ENCODE measurements at regions of chr6 and their contacts with region 1.

Region 1: DNA sequence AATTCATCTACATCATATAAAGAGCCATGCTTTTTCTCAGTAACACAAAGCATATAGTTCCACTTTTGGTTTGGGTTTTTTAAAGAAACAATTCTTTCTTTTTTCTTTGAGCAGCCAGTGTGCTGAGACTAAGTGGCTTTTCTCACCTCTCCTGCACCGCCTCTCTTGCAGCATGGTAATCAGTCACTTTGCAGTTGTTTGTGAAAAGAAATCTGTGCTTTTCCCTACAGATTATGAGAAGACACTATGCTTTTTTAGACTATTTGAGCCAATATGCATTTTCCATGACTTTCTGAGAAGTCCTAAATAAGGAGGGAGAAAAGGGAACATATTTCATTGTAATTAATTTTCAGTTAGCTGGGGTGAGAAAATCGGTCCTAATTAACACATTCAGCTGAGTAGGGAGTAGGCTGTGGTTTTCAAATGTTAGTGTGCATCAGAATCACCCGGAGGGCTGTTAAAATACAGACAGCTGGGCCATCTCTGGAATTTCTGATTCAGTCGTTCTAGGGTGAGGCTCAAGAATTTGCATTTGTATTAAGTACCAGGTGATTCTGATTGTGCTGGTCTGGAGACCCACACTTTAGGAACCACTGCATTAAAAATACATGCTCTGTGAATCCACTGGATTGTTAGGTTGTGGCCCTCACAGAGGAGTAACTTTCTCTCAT is 155.2 kb downstream of the TINAG start:
- DNase-seq: no peak
- H3K4me3 ChIP-seq: no peak overlapping the region
- H3K27ac ChIP-seq: peak overlapping the region; percentile 58
- H3K4me1 ChIP-seq: peaks cover 31% of the 10 kb centered on the region
- H3K27me3 ChIP-seq: no peaks in the 10 kb centered on the region
- CTCF ChIP-seq: no peak

Region 2: DNA sequence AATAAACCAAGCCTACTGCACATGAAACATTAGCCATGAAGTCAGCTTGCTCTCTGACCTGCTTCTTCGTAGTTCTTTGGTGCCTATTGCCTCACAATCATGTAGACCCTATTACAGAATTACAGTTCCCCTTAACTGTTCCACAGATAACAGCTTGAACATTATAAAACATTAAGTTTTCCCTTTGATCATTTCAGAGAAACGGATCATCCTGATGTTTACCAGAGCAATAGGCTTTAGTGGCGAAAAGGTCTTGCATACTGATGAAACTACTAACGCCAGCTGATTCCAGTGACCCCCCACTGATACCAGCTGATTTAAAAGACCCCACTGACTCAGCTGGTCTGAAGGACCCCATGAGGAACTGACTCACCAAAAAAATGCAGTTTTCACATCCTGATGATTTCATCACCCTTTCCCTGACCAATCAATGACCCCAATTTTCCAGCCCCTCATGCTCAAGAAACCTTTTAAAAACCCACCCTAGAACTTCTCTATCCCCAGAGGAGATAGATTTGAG is 391.6 kb before region 1 on chr6:
- CTCF ChIA-PET with region 1: no interaction called
- POLR2A ChIA-PET with region 1: no interaction called
- intact Hi-C with region 1: loop called (anchors 2 kb)
- DNase-seq: peak; percentile 33
- H3K4me3 ChIP-seq: no peak overlapping the region
- H3K27ac ChIP-seq: peak overlapping the region; percentile 21
- H3K4me1 ChIP-seq: peaks cover 54% of the 10 kb centered on the region
- H3K27me3 ChIP-seq: no peaks in the 10 kb centered on the region
- CTCF ChIP-seq: no peak

Region 3: DNA sequence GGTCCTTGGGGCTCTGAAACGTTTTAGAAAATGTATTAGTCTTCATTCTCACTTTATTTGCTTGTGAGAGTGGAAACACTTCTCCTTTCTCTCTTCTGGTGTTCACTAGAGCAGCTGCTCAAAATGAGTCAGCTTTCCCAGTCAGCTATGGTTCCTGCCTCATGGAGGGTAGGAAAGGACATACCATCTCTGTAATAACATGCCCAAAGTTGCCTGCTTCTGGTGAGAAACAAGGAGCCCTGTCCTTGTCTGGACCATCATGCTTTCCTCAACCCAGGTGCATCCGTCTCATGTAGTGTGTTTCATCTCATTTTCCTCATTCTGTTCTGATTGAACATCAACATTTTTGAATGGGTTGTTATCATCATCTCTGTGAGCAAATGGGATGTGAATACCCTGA is 172.3 kb before region 1 on chr6:
- CTCF ChIA-PET with region 1: no interaction called
- POLR2A ChIA-PET with region 1: no interaction called
- intact Hi-C with region 1: loop called (anchors 5 kb)
- DNase-seq: peak; percentile 78
- H3K4me3 ChIP-seq: no peak overlapping the region
- H3K27ac ChIP-seq: no peak overlapping the region
- H3K4me1 ChIP-seq: peaks cover 12% of the 10 kb centered on the region
- H3K27me3 ChIP-seq: peaks cover 5% of the 10 kb centered on the region
- CTCF ChIP-seq: no peak

Region 4: GRCh38 chr6:54366667-54367327 is 96.7 kb before region 1 on chr6:
- CTCF ChIA-PET with region 1: no interaction called
- POLR2A ChIA-PET with region 1: no interaction called
- intact Hi-C with region 1: loop called (anchors 10 kb)
- DNase-seq: peak; percentile 70
- H3K4me3 ChIP-seq: no peak overlapping the region
- H3K27ac ChIP-seq: no peak overlapping the region
- H3K4me1 ChIP-seq: peaks cover 10% of the 10 kb centered on the region
- H3K27me3 ChIP-seq: no peaks in the 10 kb centered on the region
- CTCF ChIP-seq: no peak

Region 5: GRCh38 chr6:54403096-54403495 is 60.4 kb before region 1 on chr6:
- CTCF ChIA-PET with region 1: no interaction called
- POLR2A ChIA-PET with region 1: no interaction called
- intact Hi-C with region 1: no loop called
- DNase-seq: no peak
- H3K4me3 ChIP-seq: no peak overlapping the region
- H3K27ac ChIP-seq: no peak overlapping the region
- H3K4me1 ChIP-seq: no peaks in the 10 kb centered on the region
- H3K27me3 ChIP-seq: no peaks in the 10 kb centered on the region
- CTCF ChIP-seq: no peak

Region 6: GRCh38 chr6:54419885-54420284 is 43.6 kb before region 1 on chr6:
- CTCF ChIA-PET with region 1: no interaction called
- POLR2A ChIA-PET with region 1: no interaction called
- intact Hi-C with region 1: no loop called
- DNase-seq: peak; percentile 84
- H3K4me3 ChIP-seq: no peak overlapping the region
- H3K27ac ChIP-seq: peak overlapping the region; percentile 84
- H3K4me1 ChIP-seq: peaks cover 14% of the 10 kb centered on the region
- H3K27me3 ChIP-seq: no peaks in the 10 kb centered on the region
- CTCF ChIP-seq: no peak

Measured in A673 (cell line).